Ascending aorta (tissue), 2 donors: ENCODE measurements at regions of chr3 and their contacts with region 1.

Region 1: GRCh38 chr3:58188173-58188564 is 22.6 kb downstream of the DNASE1L3 start:
- DNase-seq: no peak
- H3K4me3 ChIP-seq: no peak overlapping the region
- H3K27ac ChIP-seq: no peak overlapping the region
- H3K4me1 ChIP-seq: no peaks in the 10 kb centered on the region
- H3K27me3 ChIP-seq: no peaks in the 10 kb centered on the region
- CTCF ChIP-seq: no peak

Region 2: DNA sequence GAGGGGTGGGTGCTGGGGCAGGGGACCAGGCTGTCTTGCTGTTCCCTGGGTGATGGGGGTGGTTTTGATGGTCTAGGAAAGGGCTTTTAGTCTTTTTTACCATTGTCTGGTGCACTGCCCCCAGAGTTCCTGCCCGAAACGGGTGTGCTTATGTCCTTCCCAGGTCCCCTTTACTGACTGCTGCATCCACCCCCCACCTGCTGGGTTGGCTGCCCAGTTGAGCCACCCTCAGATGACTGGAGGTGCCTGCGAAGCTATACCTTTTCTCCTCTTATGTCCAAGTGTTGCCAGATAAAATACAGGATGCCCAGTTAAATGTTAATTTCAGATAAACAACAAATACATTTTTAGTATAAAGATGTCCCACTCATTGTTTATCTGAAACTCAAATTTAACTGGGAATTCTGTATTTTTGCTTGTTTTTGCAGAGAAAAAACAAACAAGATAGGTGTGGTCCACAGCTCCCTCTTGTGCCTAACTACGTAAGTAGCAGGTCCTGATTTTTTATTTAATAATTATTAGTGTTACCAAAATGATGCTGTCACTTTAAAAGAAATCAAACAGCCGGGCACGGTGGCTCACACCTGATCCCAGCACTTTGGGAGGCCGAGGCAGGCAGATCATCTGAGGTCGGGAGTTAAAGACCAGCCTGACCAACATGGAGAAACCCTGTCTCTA is 111.8 kb after region 1 on chr3:
- intact Hi-C with region 1: loop called (anchors 1 kb)
- DNase-seq: no peak
- H3K4me3 ChIP-seq: no peak overlapping the region
- H3K27ac ChIP-seq: no peak overlapping the region
- H3K4me1 ChIP-seq: no peaks in the 10 kb centered on the region
- H3K27me3 ChIP-seq: no peaks in the 10 kb centered on the region
- CTCF ChIP-seq: peak; percentile 36 to 57 (median 43)